Esophagus muscularis mucosa (tissue), 4 donors: ENCODE measurements at regions of chr1 and their contacts with region 1.

Region 1: DNA sequence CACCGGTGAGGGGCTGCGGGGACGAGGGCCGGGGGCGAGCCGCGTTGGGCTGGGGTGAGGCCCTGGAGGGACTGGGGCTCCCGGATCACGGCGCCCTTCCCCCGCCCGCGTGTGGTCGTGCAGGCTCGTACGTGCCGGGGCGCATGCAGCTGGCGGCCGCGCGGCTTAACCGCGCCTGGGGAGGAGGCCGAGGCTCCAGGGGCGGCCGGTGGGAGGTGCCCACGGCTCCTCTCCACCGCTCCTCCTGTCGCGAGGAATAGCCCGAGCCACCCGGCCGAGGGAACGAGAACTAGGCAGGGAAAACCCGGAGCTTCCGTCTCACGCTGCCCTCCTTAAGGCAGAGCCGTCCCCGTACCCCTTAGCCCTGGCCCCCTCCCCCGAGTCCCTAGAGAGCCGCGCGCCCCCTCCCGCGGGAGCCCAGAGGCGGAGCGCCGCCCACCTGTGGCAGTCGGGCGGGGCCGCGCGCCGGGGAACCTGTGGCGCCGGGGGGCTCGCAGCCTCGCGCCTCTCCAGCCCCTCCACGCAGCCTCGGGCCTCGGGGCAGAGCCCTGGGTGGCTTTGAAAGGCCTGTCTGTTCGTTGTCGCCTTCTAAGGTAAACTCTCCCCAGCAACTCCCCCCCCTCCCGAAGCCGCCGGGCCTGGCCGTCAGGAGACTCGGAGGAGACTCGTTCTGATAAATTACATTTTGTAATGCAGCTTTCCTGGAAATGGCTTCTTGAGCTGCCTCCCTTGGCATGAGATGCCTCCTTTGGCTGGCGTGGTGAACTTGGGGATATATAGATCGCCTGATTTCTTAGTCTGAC is 746 bp downstream of the AK4 start:
- DNase-seq: peak; percentile 95
- H3K4me3 ChIP-seq: peak overlapping the region; percentile 91 to 94 (median 94)
- H3K27ac ChIP-seq: peak overlapping the region; percentile 90 to 97 (median 92)
- H3K4me1 ChIP-seq: peaks cover 20 to 56% (median 35%) of the 10 kb centered on the region in 4 donors
- H3K27me3 ChIP-seq: no peaks in the 10 kb centered on the region
- CTCF ChIP-seq: no peak
- EP300 ChIP-seq: no peak
- POLR2A ChIP-seq: no peak

Region 2: GRCh38 chr1:65067491-65068201 is 81.1 kb before region 1 on chr1:
- intact Hi-C with region 1: loop called (anchors 5 kb)
- DNase-seq: peak; percentile 92
- H3K4me3 ChIP-seq: peak overlapping the region; percentile 83 to 95 (median 90)
- H3K27ac ChIP-seq: peak overlapping the region; percentile 98 to 100 (median 99)
- H3K4me1 ChIP-seq: peaks cover 21 to 45% (median 41%) of the 10 kb centered on the region in 4 donors
- H3K27me3 ChIP-seq: no peaks in the 10 kb centered on the region
- CTCF ChIP-seq: no peak
- EP300 ChIP-seq: no peak
- POLR2A ChIP-seq: peak; percentile 64

Region 3: GRCh38 chr1:65172936-65173690 is 24.4 kb after region 1 on chr1:
- intact Hi-C with region 1: loop called (anchors 1 kb)
- DNase-seq: no peak
- H3K4me3 ChIP-seq: no peak overlapping the region
- H3K27ac ChIP-seq: no peak overlapping the region
- H3K4me1 ChIP-seq: peaks cover 63 to 76% (median 71%) of the 10 kb centered on the region in 4 donors
- H3K27me3 ChIP-seq: no peaks in the 10 kb centered on the region
- CTCF ChIP-seq: no peak
- EP300 ChIP-seq: no peak
- POLR2A ChIP-seq: no peak

Region 4: DNA sequence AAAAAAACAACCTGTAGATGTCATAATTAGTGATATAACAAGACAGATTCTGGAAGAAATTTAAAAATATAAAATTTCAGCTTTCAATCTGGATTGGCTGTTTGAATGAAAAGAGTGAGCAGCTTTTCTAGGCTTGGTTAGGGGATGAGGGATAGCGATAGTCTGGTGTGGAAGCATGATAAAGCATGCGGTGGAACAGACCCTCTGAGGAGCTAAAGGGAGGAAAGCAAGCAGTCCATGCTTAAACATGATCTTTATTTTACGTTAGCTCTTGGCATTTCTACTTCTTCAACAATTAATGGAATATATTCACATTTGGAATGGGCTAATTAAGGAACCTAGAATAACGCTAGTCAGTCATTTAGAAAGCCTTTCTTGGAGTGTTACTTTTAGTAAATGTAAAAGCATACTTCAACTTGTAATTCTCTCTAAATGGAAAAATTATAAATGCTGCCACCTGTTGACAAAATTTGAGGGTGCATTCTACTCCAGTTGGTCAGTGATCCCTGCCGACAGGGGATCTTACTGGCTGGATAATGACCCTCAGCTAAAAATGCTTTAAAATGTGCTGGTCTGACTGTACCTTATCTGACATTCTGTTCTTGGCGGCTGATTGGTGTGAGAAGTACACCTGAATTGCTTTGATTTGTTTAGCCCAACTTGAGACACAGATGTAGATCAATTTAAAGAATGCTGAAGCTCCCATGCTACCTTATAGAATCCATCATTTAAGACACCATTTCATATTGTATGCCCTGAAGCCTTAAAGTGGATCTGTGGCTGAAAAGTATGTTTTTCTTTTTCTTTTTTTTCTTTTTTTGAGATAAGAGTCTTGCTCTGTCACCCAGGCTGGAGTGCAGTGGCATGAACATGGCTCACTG is 60.5 kb after region 1 on chr1:
- intact Hi-C with region 1: loop called (anchors 5 kb)
- DNase-seq: no peak
- H3K4me3 ChIP-seq: no peak overlapping the region
- H3K27ac ChIP-seq: no peak overlapping the region
- H3K4me1 ChIP-seq: peaks cover 7 to 34% (median 13%) of the 10 kb centered on the region in 4 donors
- H3K27me3 ChIP-seq: no peaks in the 10 kb centered on the region
- CTCF ChIP-seq: peak; percentile 68 to 77 (median 69)
- EP300 ChIP-seq: no peak
- POLR2A ChIP-seq: no peak

Region 5: GRCh38 chr1:65265651-65266351 is 117.1 kb after region 1 on chr1:
- intact Hi-C with region 1: no loop called
- DNase-seq: peak; percentile 83
- H3K4me3 ChIP-seq: peak overlapping the region; percentile 57 to 62 (median 60)
- H3K27ac ChIP-seq: peak overlapping the region in 3 of 4 donors; percentile 34 to 52 (median 39)
- H3K4me1 ChIP-seq: peaks cover 7 to 26% (median 23%) of the 10 kb centered on the region in 4 donors
- H3K27me3 ChIP-seq: peaks cover 0 to 7% (median 2%) of the 10 kb centered on the region in 4 donors
- CTCF ChIP-seq: peak; percentile 8 to 34 (median 23)
- EP300 ChIP-seq: no peak
- POLR2A ChIP-seq: no peak

Region 6: GRCh38 chr1:65419681-65420589 is 271.2 kb after region 1 on chr1:
- intact Hi-C with region 1: loop called (anchors 5 kb)
- DNase-seq: peak; percentile 99
- H3K4me3 ChIP-seq: peak overlapping the region; percentile 82 to 93 (median 88)
- H3K27ac ChIP-seq: peak overlapping the region; percentile 94 to 99 (median 98)
- H3K4me1 ChIP-seq: peaks cover 14 to 43% (median 39%) of the 10 kb centered on the region in 4 donors
- H3K27me3 ChIP-seq: no peaks in the 10 kb centered on the region
- CTCF ChIP-seq: no peak
- EP300 ChIP-seq: no peak
- POLR2A ChIP-seq: no peak

Region 7: DNA sequence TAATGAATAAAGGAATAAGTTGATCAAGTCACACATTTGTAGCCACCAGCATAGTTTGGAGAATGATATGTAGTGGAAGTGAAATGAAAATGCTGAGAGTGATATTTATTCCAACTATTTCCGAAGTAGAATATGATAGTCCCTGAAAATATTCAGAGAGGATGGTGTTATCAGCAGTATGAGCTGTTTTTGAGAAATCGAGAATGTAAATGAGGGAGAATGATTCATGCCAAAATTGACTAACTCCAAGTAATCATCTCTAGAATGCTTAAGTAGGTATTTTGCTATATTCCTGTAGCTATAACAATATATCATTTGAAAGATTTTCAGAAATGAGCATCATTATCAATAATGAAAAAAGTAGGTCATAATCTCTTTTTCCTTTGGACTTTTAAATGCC is 822.8 kb after region 1 on chr1:
- intact Hi-C with region 1: no loop called
- DNase-seq: no peak
- H3K4me3 ChIP-seq: no peak overlapping the region
- H3K27ac ChIP-seq: no peak overlapping the region
- H3K4me1 ChIP-seq: no peaks in the 10 kb centered on the region
- H3K27me3 ChIP-seq: no peaks in the 10 kb centered on the region
- CTCF ChIP-seq: no peak
- EP300 ChIP-seq: no peak
- POLR2A ChIP-seq: no peak